Naive thymus-derived CD4-positive, alpha-beta T cell (primary cell): ENCODE measurements at regions of chr9 and their contacts with region 1.

Region 1: DNA sequence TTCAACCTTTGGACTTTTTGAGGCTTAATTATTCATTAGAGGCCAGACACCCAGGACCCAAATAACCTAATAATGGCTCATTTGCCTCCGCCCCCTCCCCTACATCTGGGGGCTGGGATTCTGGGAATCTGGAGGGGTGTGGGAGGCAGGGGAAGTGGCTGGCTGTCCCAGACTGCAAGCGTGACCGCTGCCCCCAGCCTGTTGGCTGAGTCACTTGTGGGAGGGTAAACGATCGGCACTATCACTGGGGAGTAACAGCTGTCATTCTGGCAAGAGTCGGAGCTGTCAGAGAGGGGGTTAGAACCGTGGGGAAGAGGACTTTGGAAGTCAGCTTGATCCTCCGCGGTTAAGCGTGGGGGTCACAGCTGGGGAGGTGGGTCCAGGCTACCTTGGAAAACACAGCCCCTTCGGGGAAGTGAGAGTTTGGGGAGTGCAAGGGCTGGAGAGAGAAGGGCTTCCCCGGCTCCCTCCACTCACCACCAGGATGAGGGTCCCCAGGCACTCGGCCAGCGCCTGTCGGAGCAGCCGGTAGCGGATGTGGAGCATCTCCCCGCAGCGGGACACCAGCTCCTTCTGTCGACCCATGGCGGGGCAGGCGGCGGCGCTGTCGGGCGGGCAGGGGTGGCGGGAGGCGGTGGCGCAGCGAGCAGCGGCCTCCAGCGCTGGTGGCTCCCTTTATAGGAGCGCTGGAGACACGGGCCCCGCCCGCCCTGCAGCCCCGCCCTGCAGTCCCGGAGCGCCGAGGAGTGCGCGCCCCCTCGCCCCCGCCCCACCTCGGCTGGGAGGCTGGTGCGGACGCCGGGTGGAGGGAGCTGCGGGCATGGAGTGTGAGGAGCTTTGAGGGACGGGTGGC is at the start of gene AQP3:
- DNase-seq: peak; percentile 59 to 77 (median 72)
- ATAC-seq: peak; percentile 79
- H3K4me3 ChIP-seq: peak within 1 kb of the TSS; percentile 86
- H3K4me3 Mint-ChIP-seq: peak within 1 kb of the TSS; percentile 89 to 98 (median 94)
- H3K27ac ChIP-seq: peak within 1 kb of the TSS; percentile 85
- H3K27ac Mint-ChIP-seq: peak within 1 kb of the TSS; percentile 81 to 97 (median 96)
- H3K4me1 ChIP-seq: peaks cover 27 to 36% of the 10 kb centered on the region in 2 donors
- H3K4me1 Mint-ChIP-seq: peaks cover 23 to 60% (median 45%) of the 10 kb centered on the region in 7 donors
- H3K27me3 ChIP-seq: no peaks in the 10 kb centered on the region
- H3K27me3 Mint-ChIP-seq: no peaks in the 10 kb centered on the region
- total RNA-seq, gene AQP3: 53.3 to 173 (median 110) TPM

Region 2: DNA sequence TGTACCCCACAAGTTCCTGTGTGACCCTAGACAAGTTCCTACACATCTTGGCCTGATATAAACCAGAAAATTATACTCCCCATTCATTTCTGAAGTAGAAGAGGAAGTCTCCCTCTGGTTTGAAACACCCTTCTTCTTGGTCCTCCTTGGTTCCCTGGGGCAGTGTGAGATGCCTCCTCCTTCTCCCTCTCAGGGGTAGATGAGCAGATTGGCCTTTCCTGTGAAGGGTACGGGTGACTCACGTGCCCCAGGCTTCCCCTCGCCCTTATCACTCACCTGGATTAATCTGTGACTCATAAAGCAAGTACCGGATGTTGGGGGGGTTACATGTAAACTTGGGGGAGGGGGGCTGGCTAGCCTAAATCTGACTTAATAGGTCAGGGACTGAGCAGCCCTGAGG is 11.3 kb after region 1 on chr9:
- CTCF ChIA-PET with region 1: interaction called, 8 read pairs
- POLR2A ChIA-PET with region 1: interaction called, 32 read pairs
- intact Hi-C with region 1: loop called in 1 of 2 experiments (anchors 1 kb)
- DNase-seq: peak in 5 of 9 donors; percentile 22 to 68 (median 35)
- ATAC-seq: peak; percentile 65
- H3K4me3 ChIP-seq: no peak overlapping the region
- H3K4me3 Mint-ChIP-seq: peak overlapping the region; percentile 1 to 78 (median 60)
- H3K27ac ChIP-seq: peak overlapping the region; percentile 60
- H3K27ac Mint-ChIP-seq: peak overlapping the region; percentile 80 to 95 (median 89)
- H3K4me1 ChIP-seq: peaks cover 34 to 49% of the 10 kb centered on the region in 2 donors
- H3K4me1 Mint-ChIP-seq: peaks cover 34 to 53% (median 47%) of the 10 kb centered on the region in 7 donors
- H3K27me3 ChIP-seq: no peaks in the 10 kb centered on the region
- H3K27me3 Mint-ChIP-seq: no peaks in the 10 kb centered on the region

Region 3: DNA sequence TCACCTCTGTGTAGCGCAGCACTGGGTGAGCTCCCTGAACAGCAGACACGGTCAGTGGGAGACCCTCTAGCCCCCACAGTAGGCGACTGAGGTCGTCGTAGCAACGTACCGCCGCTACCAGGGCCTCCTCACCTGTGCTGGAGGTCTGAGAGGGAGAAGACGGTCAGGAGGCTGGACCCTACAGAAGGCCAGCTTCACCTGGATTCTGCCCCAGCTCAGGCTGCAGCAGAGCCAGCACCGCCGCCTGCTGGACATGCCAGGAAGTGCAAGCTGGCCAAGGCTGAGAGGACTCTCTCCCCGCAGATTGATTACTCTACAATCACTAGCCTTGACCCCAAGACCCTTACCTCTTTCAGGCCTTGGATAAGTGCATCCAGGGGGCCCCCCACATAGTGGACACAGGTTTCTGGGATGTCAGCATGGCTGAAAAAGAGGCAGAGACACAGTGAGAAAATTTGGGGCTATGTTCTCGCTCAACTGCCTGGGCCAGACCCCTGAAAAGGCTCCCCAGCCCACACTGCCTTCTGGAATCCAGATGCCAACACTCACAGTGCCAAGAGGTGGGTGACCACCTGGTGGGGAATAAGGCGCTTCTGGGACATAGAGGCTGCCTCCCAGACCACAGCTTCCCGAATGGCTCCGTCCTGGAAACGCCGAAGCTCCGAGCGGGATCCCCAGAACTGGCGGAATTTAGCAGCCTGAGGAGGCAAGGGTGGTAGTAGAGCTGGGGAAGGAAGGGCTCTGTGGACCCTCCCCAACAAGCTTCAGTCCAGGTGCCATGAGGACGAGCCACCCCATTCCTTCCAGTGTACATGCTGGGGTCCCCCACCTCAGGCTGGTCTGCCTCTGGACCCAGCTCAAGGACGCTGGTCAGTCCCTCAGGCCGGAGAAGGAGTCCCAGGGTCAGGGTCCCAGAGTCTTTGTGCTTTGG is 19.7 kb after region 1 on chr9:
- CTCF ChIA-PET with region 1: interaction called, 52 read pairs
- POLR2A ChIA-PET with region 1: interaction called, 32 read pairs
- intact Hi-C with region 1: loop called in 1 of 2 experiments (anchors 1 kb)
- DNase-seq: peak; percentile 42 to 82 (median 67)
- ATAC-seq: peak; percentile 84
- H3K4me3 ChIP-seq: no peak overlapping the region
- H3K4me3 Mint-ChIP-seq: peak overlapping the region in 1 of 10 donors; percentile 31
- H3K27ac ChIP-seq: peak overlapping the region; percentile 18
- H3K27ac Mint-ChIP-seq: peak overlapping the region in 6 of 9 donors; percentile 31 to 76 (median 43)
- H3K4me1 ChIP-seq: no peaks in the 10 kb centered on the region
- H3K4me1 Mint-ChIP-seq: peaks cover 5 to 12% (median 7%) of the 10 kb centered on the region in 7 donors
- H3K27me3 ChIP-seq: no peaks in the 10 kb centered on the region
- H3K27me3 Mint-ChIP-seq: no peaks in the 10 kb centered on the region

Region 4: GRCh38 chr9:33498387-33498786 is 51.2 kb after region 1 on chr9:
- CTCF ChIA-PET with region 1: no interaction called
- POLR2A ChIA-PET with region 1: no interaction called
- intact Hi-C with region 1: loop called in 1 of 2 experiments (anchors 1 kb)
- DNase-seq: peak in 1 of 9 donors; percentile 15
- ATAC-seq: no peak
- H3K4me3 ChIP-seq: no peak overlapping the region
- H3K4me3 Mint-ChIP-seq: no peak overlapping the region
- H3K27ac ChIP-seq: no peak overlapping the region
- H3K27ac Mint-ChIP-seq: no peak overlapping the region
- H3K4me1 ChIP-seq: no peaks in the 10 kb centered on the region
- H3K4me1 Mint-ChIP-seq: peaks cover 0 to 1% (median 0%) of the 10 kb centered on the region in 7 donors
- H3K27me3 ChIP-seq: no peaks in the 10 kb centered on the region
- H3K27me3 Mint-ChIP-seq: peaks cover 0 to 11% (median 0%) of the 10 kb centered on the region in 5 donors